ENCODE measurements at regions of chr13 and their contacts with region 1.

Region 1: DNA sequence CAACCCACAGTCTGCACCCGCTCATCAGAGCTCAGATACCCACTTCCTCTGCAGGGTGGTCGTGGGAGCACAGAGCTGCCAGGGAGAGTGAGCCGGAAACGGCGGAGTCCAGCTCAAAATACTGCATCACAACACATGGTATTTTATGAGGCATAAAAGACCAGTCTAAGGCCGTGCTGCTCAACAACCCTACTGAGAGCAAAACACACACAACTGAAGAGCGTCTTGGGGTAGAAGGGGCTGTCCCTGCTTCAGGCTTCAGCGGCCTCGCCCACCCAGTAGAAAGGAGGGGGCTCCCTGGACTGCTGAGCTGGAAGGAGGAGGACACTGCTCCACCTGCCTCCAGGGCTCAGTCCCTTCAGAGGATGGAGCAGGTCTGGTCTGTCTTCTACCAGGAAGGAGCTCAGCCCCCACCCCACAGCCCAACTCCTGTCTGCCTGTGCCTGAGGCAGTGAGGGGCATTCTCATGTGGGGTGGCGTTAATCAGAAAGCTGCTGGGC is 36.9 kb downstream of the NAXD start:
- DNase-seq: no peak
- ATAC-seq: peak; percentile 65
- H3K4me3 Mint-ChIP-seq: peak overlapping the region; percentile 64
- H3K27ac Mint-ChIP-seq: peak overlapping the region; percentile 76
- H3K4me1 Mint-ChIP-seq: peaks cover 71% of the 10 kb centered on the region
- H3K27me3 Mint-ChIP-seq: no peaks in the 10 kb centered on the region
- CTCF ChIP-seq: no peak

Region 2: DNA sequence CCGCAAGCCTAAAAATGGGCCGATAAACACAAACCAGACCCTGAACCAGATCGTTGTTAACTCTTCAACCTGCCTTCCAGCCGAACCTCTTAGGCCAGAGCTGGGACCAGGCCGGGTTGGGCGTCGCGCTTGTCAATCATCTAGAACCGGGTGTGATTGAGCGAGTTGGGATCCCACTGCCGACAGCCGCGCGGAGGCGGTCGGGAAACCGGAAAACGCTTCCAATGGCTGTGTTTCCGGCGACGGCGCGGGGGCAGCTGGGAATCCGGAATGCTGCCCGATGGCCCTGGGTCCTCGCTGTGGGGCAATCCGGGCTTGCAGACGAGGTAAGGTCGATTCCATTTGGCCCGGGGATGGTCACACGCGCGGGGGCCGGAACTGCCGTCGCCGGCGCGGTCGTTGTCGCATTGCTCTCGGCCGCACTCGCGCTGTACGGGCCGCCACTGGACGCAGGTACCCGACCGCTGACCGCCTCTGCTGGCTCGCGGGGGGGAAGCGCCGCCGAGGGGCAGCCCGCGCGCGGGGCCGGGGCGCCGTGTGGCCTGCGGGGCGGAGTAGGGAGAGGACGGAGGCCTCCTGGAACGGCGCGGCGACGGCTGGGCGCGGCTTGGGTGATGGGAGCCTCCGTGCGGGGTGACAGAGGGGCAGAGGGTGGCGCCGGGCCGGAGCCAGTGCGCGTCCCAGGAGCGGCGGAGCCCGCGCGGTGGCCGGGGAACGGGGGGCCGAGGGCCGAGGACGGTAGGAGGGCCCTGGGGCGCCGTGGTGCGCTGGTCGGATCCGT is 36.8 kb before region 1 on chr13 and contains the start of gene NAXD:
- CTCF ChIA-PET with region 1: no interaction called
- POLR2A ChIA-PET with region 1: interaction called, 3 read pairs
- intact Hi-C with region 1: loop called (anchors 5 kb)
- DNase-seq: peak; percentile 66
- ATAC-seq: peak; percentile 82
- H3K4me3 Mint-ChIP-seq: peak within 1 kb of the TSS; percentile 94
- H3K27ac Mint-ChIP-seq: peak within 1 kb of the TSS; percentile 89
- H3K4me1 Mint-ChIP-seq: peaks cover 37% of the 10 kb centered on the region
- H3K27me3 Mint-ChIP-seq: no peaks in the 10 kb centered on the region
- CTCF ChIP-seq: no peak
- total RNA-seq, gene NAXD: 31.1 and 32.7 TPM in 2 replicates

Region 3: GRCh38 chr13:110665491-110666254 is 13.4 kb after region 1 on chr13:
- CTCF ChIA-PET with region 1: interaction called, 3 read pairs
- POLR2A ChIA-PET with region 1: interaction called, 3 read pairs
- intact Hi-C with region 1: loop called (anchors 1 kb)
- DNase-seq: no peak
- ATAC-seq: peak; percentile 96
- H3K4me3 Mint-ChIP-seq: peak overlapping the region; percentile 67
- H3K27ac Mint-ChIP-seq: peak overlapping the region; percentile 80
- H3K4me1 Mint-ChIP-seq: peaks cover 69% of the 10 kb centered on the region
- H3K27me3 Mint-ChIP-seq: no peaks in the 10 kb centered on the region
- CTCF ChIP-seq: no peak

Measured in activated B cell treated with CpG ODN at 0.5 μM for 24 hours (primary cell).